Cardiac septum (tissue), 1 donor: ENCODE measurements at regions of chr19 and their contacts with region 1.

Region 1: DNA sequence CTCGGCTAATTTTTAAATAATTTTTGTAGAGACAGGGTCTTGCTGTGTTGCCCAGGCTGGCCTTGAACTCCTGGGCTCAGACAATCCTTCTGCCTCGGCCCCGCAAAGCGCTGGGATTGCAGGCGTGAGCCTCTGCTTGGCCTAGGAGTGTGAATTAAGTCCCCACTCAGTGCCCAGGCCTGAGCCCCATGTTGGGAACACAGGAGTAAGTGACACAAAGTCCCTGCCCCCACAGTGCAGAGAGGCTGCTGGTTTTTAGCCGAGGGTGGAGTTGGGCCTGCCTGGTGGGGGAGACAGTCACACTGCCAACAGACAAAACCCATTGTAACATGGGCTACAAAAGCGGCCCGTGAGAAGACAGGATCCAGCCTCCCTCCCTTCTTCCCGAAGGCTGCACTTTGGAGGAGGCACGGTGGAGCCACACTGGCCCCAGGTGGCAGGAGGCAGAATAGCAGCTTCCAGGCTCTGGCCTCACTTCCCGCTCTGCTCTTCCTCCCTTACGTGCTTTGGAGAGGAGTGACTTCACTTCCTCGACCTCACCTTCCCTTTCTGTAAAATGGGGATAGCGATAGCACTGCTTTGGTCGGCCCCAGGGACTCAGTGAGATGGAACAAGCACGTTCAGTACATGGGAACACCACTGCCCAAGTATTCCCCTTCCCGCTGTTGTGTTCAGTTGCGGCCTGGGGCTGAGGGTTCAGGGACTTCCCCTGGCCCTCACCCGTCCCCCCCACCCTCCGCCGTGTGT is 15.2 kb upstream of the EHD2 start:
- DNase-seq: no peak

Region 2: GRCh38 chr19:47436712-47437401 is 261.2 kb before region 1 on chr19:
- intact Hi-C with region 1: loop called (anchors 1 kb)
- DNase-seq: peak; percentile 84

Region 3: DNA sequence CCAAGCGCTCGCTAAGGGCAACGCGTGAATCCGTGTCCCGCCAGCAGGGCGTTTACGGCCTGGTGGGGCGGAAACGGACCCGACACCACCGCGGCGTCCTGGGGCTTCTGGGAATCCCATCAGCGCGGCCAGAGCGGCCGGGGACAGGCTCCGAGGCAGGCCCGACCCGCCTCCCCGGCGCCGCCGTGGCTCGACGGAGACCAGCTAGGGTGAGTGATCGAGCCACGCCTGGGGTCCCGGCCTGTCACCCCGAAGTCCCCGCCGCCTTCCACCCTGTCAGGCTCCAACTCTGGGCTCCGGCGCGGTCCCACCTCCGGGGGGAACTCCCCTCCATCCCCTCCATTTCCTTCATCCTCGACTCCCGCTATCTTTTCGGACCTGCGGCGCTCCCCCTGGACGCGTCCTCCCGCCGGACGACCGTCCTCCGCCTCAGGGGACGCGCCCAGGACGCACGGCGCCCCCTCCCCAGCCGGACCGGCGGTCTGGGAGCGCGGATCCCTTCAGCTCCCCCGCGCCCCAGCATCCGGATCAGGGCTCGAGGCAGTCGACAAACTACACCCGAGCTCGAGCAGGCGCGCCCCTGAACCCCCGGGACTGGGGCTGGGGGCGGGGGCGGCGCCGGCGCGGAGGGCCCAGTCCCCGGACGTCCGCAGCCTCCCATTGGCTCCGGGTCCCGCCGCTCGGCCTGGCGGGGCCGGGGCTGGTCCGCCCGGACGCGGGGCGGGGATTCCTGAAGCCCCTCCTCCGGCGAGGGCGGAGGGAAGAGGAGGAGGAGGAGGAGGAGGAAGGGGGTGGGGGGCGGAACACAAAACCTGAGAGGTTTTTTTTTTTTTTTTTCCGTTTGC is 89.7 kb before region 1 on chr19:
- intact Hi-C with region 1: loop called (anchors 5 kb)
- DNase-seq: peak; percentile 96